ENCODE measurements at regions of chr2 and their contacts with region 1.

Region 1: DNA sequence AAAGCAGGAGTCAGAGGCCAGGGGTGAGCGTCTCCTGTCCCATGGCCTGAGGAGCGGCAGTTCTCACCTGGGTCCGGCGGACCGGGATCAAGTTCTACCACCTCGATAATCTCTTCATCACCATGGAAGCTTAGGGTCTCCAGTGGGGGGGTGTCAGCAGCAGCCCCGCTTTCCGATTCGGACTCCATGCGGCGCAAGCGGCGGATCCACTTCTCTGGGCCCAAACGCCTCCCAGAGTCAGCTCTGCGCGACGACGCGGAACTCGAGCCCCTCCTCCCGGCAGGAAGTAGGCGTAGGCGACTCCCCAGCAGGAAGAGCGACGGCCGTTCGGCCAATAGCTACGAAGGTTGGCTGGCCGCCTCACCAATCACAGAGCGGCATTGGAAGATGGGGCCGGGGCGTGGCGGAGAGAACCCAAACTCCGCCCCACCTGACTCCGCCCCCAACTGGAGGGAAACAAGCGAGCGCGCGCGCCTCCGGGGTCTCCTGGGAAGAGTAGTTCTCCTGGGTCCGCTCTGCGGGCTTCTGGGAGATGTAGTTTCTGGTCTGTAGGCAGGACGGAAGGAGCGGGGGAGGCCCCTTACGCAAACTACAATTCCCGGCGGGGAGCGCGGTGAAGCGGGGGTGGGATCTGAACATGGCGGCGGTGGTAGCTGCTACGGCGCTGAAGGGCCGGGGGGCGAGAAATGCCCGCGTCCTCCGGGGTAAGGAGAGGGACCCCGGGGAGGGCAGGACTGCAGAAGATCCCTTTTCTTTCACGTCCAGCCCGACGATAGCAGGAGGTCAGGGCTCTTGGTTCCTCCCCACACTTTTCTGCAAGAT is at the starts of genes AAMP and PNKD:
- DNase-seq: peak; percentile 94 to 100
- H3K4me3 ChIP-seq: peak within 1 kb of the TSS; percentile 91
- H3K27ac ChIP-seq: peak within 1 kb of the TSS; percentile 54
- H3K4me1 ChIP-seq: peaks cover 39% of the 10 kb centered on the region
- H3K27me3 ChIP-seq: no peaks in the 10 kb centered on the region
- CTCF ChIP-seq: no peak; the same call in 1 of the 2 replicates
- total RNA-seq, gene AAMP: 126 and 165 TPM in 2 replicates
- total RNA-seq, gene PNKD: 94.7 and 102 TPM in 2 replicates

Region 2: GRCh38 chr2:216436383-216436782 is 1833.7 kb before region 1 on chr2:
- CTCF ChIA-PET with region 1: no interaction called
- POLR2A ChIA-PET with region 1: no interaction called
- intact Hi-C with region 1: no loop called
- DNase-seq: no peak
- H3K4me3 ChIP-seq: no peak overlapping the region
- H3K27ac ChIP-seq: no peak overlapping the region
- H3K4me1 ChIP-seq: no peaks in the 10 kb centered on the region
- H3K27me3 ChIP-seq: no peaks in the 10 kb centered on the region
- CTCF ChIP-seq: no peak

Region 3: GRCh38 chr2:218152765-218153164 is 117.3 kb before region 1 on chr2:
- CTCF ChIA-PET with region 1: no interaction called
- POLR2A ChIA-PET with region 1: interaction called, 11 read pairs
- intact Hi-C with region 1: no loop called
- DNase-seq: peak; percentile 51 to 66
- H3K4me3 ChIP-seq: no peak overlapping the region
- H3K27ac ChIP-seq: no peak overlapping the region
- H3K4me1 ChIP-seq: peaks cover 13% of the 10 kb centered on the region
- H3K27me3 ChIP-seq: no peaks in the 10 kb centered on the region; the same call in 1 of the 2 replicates
- CTCF ChIP-seq: no peak

Region 4: DNA sequence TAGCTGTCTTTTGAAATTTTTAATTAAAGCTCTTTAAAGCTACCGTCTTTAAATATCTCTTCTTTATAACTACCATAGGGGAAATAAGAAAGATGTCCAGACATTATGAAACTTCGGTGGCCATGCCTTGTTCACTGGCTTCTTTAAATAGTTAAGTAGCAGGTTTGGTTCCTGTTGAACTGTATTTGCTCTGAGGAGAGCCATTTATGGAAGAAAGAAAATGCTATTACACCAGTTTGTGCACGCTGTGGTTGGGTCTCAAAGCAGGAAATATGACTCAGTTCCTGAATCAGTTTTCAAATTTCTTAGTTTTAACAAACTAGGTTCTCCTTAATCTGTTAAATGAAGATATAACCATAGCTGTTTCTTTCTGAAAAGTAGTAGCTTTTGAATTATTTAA is 40.9 kb before region 1 on chr2:
- CTCF ChIA-PET with region 1: no interaction called
- POLR2A ChIA-PET with region 1: no interaction called
- intact Hi-C with region 1: no loop called
- DNase-seq: peak; percentile 33 to 83
- H3K4me3 ChIP-seq: no peak overlapping the region
- H3K27ac ChIP-seq: peak overlapping the region; percentile 81
- H3K4me1 ChIP-seq: peaks cover 32% of the 10 kb centered on the region
- H3K27me3 ChIP-seq: no peaks in the 10 kb centered on the region
- CTCF ChIP-seq: no peak

Region 5: GRCh38 chr2:218286570-218287459 is 16.7 kb after region 1 on chr2:
- CTCF ChIA-PET with region 1: interaction called, 26 read pairs
- POLR2A ChIA-PET with region 1: interaction called, 13 read pairs
- intact Hi-C with region 1: loop called (anchors 1 kb)
- DNase-seq: peak; percentile 89 to 93
- H3K4me3 ChIP-seq: peak overlapping the region; percentile 56
- H3K27ac ChIP-seq: peak overlapping the region; percentile 98
- H3K4me1 ChIP-seq: peaks cover 91% of the 10 kb centered on the region
- H3K27me3 ChIP-seq: no peaks in the 10 kb centered on the region
- CTCF ChIP-seq: no peak

Region 6: GRCh38 chr2:218301176-218301819 is 31.2 kb after region 1 on chr2:
- CTCF ChIA-PET with region 1: no interaction called
- POLR2A ChIA-PET with region 1: interaction called, 8 read pairs
- intact Hi-C with region 1: loop called (anchors 1 kb)
- DNase-seq: peak; percentile 73 to 81
- H3K4me3 ChIP-seq: no peak overlapping the region
- H3K27ac ChIP-seq: no peak overlapping the region
- H3K4me1 ChIP-seq: peaks cover 34% of the 10 kb centered on the region
- H3K27me3 ChIP-seq: no peaks in the 10 kb centered on the region
- CTCF ChIP-seq: peak; percentile 97

Region 7: GRCh38 chr2:218360447-218360846 is 90.3 kb after region 1 on chr2:
- CTCF ChIA-PET with region 1: interaction called, 5 read pairs
- POLR2A ChIA-PET with region 1: no interaction called
- intact Hi-C with region 1: loop called (anchors 1 kb)
- DNase-seq: no peak
- H3K4me3 ChIP-seq: no peak overlapping the region
- H3K27ac ChIP-seq: peak overlapping the region; percentile 82
- H3K4me1 ChIP-seq: peaks cover 36% of the 10 kb centered on the region
- H3K27me3 ChIP-seq: no peaks in the 10 kb centered on the region
- CTCF ChIP-seq: no peak

Region 8: DNA sequence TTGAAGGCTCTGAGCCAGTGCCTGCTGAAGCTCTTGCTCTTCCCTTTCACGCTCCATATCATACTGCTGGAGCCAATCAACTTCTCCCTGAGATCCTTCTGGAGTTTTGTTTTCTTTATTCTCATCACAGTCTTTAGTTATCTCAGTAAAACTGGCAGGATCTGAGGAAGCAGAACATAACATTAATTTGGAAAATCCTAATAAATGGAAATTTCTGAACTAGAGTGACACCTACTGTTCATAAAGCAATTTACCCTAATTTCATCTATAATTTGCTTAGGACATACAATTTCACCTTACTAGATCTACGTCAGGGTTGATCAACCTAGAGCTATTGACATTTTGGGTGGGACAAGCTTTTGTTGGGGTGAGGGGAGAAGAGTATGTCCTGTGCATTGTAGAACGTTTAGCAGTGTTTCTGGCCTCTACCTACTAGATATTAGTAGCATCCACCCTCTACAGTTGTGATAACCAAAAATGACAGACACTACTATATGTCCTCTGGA is 196.0 kb after region 1 on chr2:
- CTCF ChIA-PET with region 1: interaction called, 3 read pairs
- POLR2A ChIA-PET with region 1: no interaction called
- intact Hi-C with region 1: loop called (anchors 1 kb)
- DNase-seq: no peak
- H3K4me3 ChIP-seq: no peak overlapping the region
- H3K27ac ChIP-seq: no peak overlapping the region
- H3K4me1 ChIP-seq: no peaks in the 10 kb centered on the region
- H3K27me3 ChIP-seq: no peaks in the 10 kb centered on the region
- CTCF ChIP-seq: peak; percentile 77

Region 9: GRCh38 chr2:218852911-218853667 is 583.0 kb after region 1 on chr2:
- CTCF ChIA-PET with region 1: no interaction called
- POLR2A ChIA-PET with region 1: no interaction called
- intact Hi-C with region 1: loop called (anchors 5 kb)
- DNase-seq: peak in 1 of 2 experiments; percentile 37
- H3K4me3 ChIP-seq: no peak overlapping the region
- H3K27ac ChIP-seq: no peak overlapping the region
- H3K4me1 ChIP-seq: peaks cover 60% of the 10 kb centered on the region
- H3K27me3 ChIP-seq: no peaks in the 10 kb centered on the region
- CTCF ChIP-seq: peak; percentile 78